A549 (cell line): ENCODE measurements at regions of chr15 and their contacts with region 1.

Region 1: GRCh38 chr15:101294731-101295606 is at the start of gene SNRPA1:
- DNase-seq: peak; percentile 97 to 98
- ATAC-seq: peak; percentile 83 to 91
- H3K4me3 ChIP-seq: peak within 1 kb of the TSS; percentile 95
- H3K27ac ChIP-seq: peak within 1 kb of the TSS; percentile 91 to 97
- H3K4me1 ChIP-seq: peaks cover 36% of the 10 kb centered on the region
- CTCF ChIP-seq: no peak
- EP300 ChIP-seq: no peak
- POLR2A ChIP-seq: peak; percentile 80
- RAD21 ChIP-seq: no peak
- polyA plus RNA-seq, gene SNRPA1: 127 and 177 TPM in 2 replicates

Region 2: GRCh38 chr15:101283931-101284330 is 11.0 kb before region 1 on chr15:
- CTCF ChIA-PET with region 1: interaction called, 29 read pairs
- POLR2A ChIA-PET with region 1: interaction called, 3 read pairs
- DNase-seq: no peak
- ATAC-seq: no peak
- H3K4me3 ChIP-seq: no peak overlapping the region
- H3K27ac ChIP-seq: no peak overlapping the region
- H3K4me1 ChIP-seq: no peaks in the 10 kb centered on the region
- CTCF ChIP-seq: no peak
- EP300 ChIP-seq: no peak
- POLR2A ChIP-seq: no peak
- RAD21 ChIP-seq: no peak

Region 3: DNA sequence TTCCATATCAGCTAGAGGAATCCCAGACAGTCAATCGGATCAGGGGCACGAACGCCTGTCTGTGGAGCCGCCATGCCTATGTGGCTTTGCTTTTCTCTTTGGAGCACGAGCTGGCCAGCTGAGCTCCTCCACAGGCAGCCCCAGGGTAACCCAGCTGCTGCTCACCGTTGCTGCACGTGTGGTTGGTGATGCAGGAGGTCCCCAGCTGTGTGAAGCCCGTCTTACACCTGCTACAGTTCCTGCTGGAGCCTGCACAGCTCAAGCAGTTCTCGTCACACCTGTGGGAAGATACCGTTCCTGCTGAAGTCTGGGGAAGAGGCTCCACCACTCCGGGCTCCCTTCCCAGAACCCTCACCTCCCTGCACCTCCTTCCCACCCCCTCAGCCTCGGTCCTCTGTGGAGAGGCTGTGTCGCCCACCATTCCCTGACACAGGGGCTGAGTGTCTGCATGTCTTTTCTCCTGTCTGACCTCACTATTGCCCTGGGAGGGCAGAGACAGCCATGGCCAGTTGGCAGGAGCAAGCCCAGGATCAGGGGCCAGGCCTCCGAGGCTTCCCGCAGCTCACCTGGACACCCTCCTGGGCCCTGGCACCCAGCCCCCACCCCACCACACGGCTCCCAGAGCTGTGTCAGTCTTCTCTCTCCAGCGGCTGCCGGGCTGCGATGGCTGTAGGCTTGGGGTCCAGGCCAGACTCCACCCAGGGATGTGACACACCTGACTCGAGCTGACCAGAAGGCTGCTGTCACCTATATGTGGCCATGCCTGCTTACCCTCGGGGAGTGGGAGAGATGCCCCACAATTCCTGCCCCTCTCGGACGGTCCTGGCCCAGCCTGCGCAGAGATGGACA is 12.3 kb after region 1 on chr15:
- CTCF ChIA-PET with region 1: interaction called, 29 read pairs
- POLR2A ChIA-PET with region 1: no interaction called
- DNase-seq: no peak
- ATAC-seq: peak in 1 of 2 experiments; percentile 11; a peak in 3 of 6 replicates
- H3K4me3 ChIP-seq: no peak overlapping the region
- H3K27ac ChIP-seq: no peak overlapping the region
- H3K4me1 ChIP-seq: no peaks in the 10 kb centered on the region
- CTCF ChIP-seq: no peak
- EP300 ChIP-seq: no peak
- POLR2A ChIP-seq: no peak
- RAD21 ChIP-seq: no peak

Region 4: DNA sequence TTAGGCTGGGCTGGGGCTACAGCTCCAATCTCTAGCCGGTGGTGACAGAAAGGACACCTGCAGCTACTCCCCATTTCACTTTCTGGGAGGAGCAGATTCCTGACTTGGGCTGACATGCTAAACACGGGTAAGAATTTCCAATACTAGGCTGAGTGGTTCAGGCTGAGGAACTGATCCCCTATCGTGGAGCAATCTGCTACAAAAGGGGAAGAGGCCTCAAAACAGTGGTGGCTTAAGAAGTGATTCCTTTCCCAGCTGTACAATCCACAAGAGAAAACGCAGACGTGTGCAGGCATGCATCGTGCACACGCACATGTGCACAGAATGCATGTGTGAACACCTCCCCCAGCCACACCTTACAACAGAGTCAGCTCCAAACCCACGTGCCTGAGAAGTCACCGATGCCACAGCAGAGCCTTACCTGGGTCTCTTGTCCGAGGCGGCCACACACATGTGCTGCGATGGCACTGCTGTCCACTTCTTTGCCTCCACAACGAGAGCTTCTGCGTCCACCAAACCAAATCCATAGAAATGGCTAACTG is 86.8 kb after region 1 on chr15:
- CTCF ChIA-PET with region 1: no interaction called
- POLR2A ChIA-PET with region 1: no interaction called
- DNase-seq: no peak
- ATAC-seq: no peak
- H3K4me3 ChIP-seq: no peak overlapping the region
- H3K27ac ChIP-seq: no peak overlapping the region
- H3K4me1 ChIP-seq: no peaks in the 10 kb centered on the region
- CTCF ChIP-seq: no peak
- EP300 ChIP-seq: no peak
- POLR2A ChIP-seq: no peak
- RAD21 ChIP-seq: no peak

Region 5: GRCh38 chr15:101646672-101647071 is 351.7 kb after region 1 on chr15:
- CTCF ChIA-PET with region 1: interaction called, 251 read pairs
- POLR2A ChIA-PET with region 1: interaction called, 6 read pairs
- DNase-seq: peak in 1 of 2 experiments; percentile 25
- ATAC-seq: no peak; a peak in 1 of 6 replicates
- H3K4me3 ChIP-seq: no peak overlapping the region
- H3K27ac ChIP-seq: no peak overlapping the region
- H3K4me1 ChIP-seq: peaks cover 15% of the 10 kb centered on the region
- CTCF ChIP-seq: no peak
- EP300 ChIP-seq: no peak
- POLR2A ChIP-seq: no peak
- RAD21 ChIP-seq: no peak